Aorta (tissue), 5 donors: ENCODE measurements at regions of chr7 and their contacts with region 1.

Region 1: DNA sequence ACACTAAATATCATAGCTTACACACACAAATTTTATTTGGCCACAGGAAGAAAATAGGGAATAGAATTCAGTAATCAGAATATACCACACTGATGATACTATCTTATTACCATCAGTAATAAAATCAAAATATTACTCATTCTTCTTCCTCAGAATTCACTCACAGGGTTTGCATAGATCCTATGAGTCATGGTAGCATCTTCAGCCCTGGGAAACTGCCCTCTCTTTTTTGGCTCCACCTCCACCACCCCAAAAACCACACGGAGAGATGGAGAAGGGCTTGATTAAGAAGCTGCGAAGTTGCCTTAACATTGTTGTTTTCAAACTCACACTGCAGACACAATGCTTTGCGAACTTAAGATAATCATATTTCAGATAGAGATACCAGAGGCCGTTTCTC is 154.1 kb upstream of the AHR start:
- DNase-seq: no peak
- ATAC-seq: no peak
- H3K4me3 ChIP-seq: no peak overlapping the region
- H3K27ac ChIP-seq: no peak overlapping the region
- H3K4me1 ChIP-seq: no peaks in the 10 kb centered on the region
- H3K27me3 ChIP-seq: no peaks in the 10 kb centered on the region

Region 2: DNA sequence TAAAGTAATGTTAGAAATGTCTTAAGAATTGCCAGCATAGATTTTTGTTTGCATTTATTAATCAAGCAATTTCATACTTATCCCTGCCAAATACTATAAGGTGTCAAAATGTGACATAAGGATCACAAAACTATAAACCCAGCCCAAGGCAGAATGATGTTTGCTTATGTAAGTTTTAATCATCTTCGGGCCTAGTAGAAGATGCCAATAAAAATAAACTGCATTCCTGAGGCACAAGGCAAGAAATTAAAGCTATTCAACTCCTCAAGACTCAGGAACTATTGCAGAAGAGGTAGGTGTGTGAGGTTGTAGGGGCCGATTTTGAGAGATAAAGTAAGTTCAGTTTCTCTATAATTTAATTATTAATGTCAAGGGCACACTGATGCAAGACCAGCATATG is 35.3 kb before region 1 on chr7:
- intact Hi-C with region 1: no loop called
- DNase-seq: no peak
- ATAC-seq: no peak
- H3K4me3 ChIP-seq: no peak overlapping the region
- H3K27ac ChIP-seq: no peak overlapping the region
- H3K4me1 ChIP-seq: no peaks in the 10 kb centered on the region
- H3K27me3 ChIP-seq: no peaks in the 10 kb centered on the region

Region 3: GRCh38 chr7:17195576-17195975 is 51.3 kb after region 1 on chr7:
- intact Hi-C with region 1: no loop called
- DNase-seq: no peak
- ATAC-seq: no peak
- H3K4me3 ChIP-seq: no peak overlapping the region
- H3K27ac ChIP-seq: no peak overlapping the region
- H3K4me1 ChIP-seq: no peaks in the 10 kb centered on the region
- H3K27me3 ChIP-seq: no peaks in the 10 kb centered on the region

Region 4: DNA sequence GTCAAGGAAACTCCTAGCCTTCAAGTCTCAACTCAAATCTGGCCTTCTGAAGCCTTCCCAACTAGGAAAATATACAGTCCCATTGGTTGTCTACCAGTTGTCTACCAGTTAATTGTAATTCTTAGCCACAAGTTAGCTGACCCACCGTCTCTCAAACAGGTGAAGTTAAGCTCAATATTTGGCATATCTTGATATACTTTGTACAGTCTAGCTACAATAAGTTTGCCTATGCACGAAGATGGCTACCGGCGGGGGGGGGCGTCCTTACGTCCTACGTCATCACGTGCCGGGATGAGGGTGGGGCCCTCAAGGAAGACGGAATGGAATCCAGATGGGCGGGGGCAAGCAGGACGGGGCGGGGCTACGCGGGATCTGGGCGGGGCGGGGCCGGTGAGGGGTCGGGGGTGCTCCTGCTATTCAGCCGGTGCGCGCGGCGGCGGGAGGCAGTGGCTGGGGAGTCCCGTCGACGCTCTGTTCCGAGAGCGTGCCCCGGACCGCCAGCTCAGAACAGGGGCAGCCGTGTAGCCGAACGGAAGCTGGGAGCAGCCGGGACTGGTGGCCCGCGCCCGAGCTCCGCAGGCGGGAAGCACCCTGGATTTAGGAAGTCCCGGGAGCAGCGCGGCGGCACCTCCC is 154.0 kb after region 1 on chr7 and contains the start of gene AHR:
- intact Hi-C with region 1: loop called in 1 of 2 experiments (anchors 10 kb)
- DNase-seq: peak; percentile 95 to 98
- ATAC-seq: peak; percentile 94
- H3K4me3 ChIP-seq: peak within 1 kb of the TSS; percentile 11 to 88
- H3K27ac ChIP-seq: peak within 1 kb of the TSS; percentile 17 to 45
- H3K4me1 ChIP-seq: peaks cover 0 to 2% of the 10 kb centered on the region in 2 donors
- H3K27me3 ChIP-seq: peaks cover 0 to 2% of the 10 kb centered on the region in 2 donors
- total RNA-seq, gene AHR: 65.8 to 117 TPM